Heart right ventricle (tissue), 16 donors: ENCODE measurements at regions of chr21 and their contacts with region 1.

Region 1: DNA sequence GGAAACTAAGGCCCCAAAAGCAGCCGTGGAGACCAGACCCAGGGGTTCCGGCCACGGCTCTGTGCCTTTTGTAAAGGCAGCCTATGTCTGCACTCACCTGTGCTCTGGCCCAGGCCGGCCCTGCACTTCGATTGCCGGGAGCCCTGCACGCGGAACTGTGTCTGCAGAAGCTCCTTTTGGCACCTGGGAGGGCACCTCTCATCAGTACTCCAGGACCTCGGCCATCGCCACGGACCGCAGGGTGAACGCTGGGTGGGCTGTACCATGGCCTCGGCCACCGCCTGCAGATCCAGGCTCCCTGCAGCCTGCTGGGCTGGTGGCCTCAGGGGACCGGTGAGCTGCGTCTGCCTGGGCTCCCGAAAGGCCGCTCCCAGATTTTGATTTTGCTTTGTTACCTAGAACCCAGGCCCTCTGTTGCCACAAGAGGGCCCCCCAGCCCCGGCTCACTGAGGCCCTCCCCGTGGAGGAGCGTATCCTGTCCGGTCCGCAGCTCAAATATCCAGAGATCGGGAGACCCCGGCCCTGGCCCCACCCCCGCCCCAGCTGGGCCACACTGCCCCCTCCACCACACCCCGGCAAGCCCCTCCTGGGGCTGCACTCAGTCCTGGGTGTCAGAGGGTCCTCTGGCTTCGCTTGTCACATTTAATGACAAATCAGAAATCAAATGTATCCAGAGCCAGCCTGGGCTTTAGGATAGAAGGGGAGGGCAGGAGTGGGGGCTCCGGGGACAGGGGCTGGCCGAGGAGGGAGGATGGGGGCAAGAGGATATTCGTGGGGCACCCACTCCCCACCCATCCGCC is 60.2 kb upstream of the PDE9A start:
- DNase-seq: peak; percentile 60 to 69
- ATAC-seq: peak; percentile 88 to 97 (median 92)
- H3K4me3 ChIP-seq: peak overlapping the region in 2 of 10 donors; percentile 16 to 22
- H3K27ac ChIP-seq: no peak overlapping the region
- H3K4me1 ChIP-seq: peaks cover 0 to 11% (median 8%) of the 10 kb centered on the region in 9 donors
- H3K27me3 ChIP-seq: peaks cover 4 to 24% (median 12%) of the 10 kb centered on the region in 7 donors
- CTCF ChIP-seq: peak; percentile 79 to 91 (median 84)

Region 2: GRCh38 chr21:42463861-42464520 is 129.2 kb before region 1 on chr21:
- intact Hi-C with region 1: no loop called
- DNase-seq: peak in 1 of 2 donors; percentile 34
- ATAC-seq: peak in 3 of 8 donors; percentile 29 to 49 (median 30)
- H3K4me3 ChIP-seq: no peak overlapping the region
- H3K27ac ChIP-seq: no peak overlapping the region
- H3K4me1 ChIP-seq: peaks cover 0 to 34% (median 4%) of the 10 kb centered on the region in 9 donors
- H3K27me3 ChIP-seq: peaks cover 0 to 3% (median 0%) of the 10 kb centered on the region in 7 donors
- CTCF ChIP-seq: no peak

Region 3: DNA sequence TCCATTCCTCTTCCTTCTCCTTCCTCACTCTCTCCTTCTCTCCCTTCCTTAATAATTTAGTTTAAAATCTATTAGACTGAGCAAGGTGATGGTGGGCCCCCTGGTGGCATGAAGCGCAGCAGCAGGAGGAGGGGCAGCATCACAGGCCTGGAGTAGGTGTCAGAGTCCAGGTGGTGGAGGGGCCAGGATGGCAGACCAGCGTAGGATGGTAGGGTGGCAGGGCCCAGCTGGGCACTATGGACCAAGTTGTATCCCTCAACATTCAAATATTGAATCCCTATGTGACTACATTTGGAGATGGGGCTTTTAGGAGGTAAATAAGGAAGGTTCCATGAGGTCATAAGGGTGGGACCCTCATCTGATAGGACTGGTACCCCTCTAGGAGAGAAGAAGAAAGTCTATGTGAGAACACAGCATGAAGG is 225.1 kb after region 1 on chr21:
- intact Hi-C with region 1: loop called (anchors 1 to 5 kb)
- DNase-seq: peak; percentile 23 to 61
- ATAC-seq: peak in 7 of 8 donors; percentile 62 to 86 (median 77)
- H3K4me3 ChIP-seq: no peak overlapping the region
- H3K27ac ChIP-seq: no peak overlapping the region
- H3K4me1 ChIP-seq: no peaks in the 10 kb centered on the region
- H3K27me3 ChIP-seq: peaks cover 0 to 28% (median 8%) of the 10 kb centered on the region in 7 donors
- CTCF ChIP-seq: peak; percentile 79 to 96 (median 91)

Region 4: DNA sequence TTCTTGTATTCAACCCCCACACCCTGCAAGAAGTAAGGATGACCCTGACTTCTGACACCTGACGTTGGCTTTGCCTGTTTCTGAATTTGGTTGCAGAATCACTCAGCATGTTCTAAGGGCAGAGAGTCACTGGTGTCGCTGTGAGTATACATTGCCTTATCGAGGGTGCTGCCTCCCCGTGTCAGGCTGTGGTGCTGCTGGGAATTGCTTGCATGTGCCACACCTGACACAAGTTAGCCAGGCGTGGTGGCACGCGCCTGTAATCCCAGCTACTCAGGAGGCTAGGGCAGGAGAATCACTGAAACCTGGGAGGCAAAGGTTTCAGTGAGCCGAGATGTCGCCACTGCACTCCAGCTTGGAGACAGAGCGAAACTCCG is 240.2 kb after region 1 on chr21:
- intact Hi-C with region 1: loop called in 2 of 10 experiments (anchors 5 kb)
- DNase-seq: peak in 1 of 2 donors; percentile 27
- ATAC-seq: peak in 2 of 8 donors; percentile 35 to 37
- H3K4me3 ChIP-seq: no peak overlapping the region
- H3K27ac ChIP-seq: no peak overlapping the region
- H3K4me1 ChIP-seq: peaks cover 0 to 10% (median 0%) of the 10 kb centered on the region in 9 donors
- H3K27me3 ChIP-seq: peaks cover 0 to 50% (median 46%) of the 10 kb centered on the region in 7 donors
- CTCF ChIP-seq: peak in 2 of 9 donors; percentile 27 to 49